ENCODE measurements at regions of chr16 and their contacts with region 1.

Region 1: DNA sequence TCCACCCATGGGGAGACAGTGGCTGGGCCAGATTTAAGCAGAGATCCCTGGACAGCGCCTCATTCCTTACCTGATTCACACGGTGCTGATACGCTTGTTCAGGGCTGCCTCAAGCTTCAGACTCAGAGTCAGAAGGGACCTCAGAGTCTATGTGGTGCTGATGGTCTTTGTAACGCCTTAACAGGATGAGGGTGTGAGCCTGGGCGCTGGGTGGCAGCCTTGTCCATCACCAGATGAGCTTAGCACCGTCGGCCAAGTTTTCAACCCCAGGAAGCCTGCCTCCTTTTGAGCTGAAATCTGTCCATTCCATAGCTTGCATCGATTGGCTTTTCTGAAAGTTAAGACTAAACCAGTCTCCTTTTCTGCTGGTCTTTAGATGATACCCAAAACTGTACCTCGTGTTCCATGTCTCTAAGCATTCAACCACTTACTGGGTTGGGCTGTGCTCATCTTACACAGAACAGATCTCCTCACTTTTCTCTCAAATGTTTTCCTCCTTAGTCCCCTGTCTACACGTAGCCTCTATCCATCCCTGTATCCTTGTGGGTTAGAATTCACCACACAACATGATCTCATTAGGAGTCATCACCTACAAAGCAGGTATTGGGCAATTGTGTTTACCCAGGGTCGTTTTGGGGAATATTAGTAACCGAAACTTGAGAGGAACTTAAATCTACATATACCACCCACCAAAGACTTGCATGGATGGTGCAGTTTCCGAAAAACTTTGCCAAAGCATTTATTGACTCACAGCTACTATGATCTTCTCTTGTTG is 573.4 kb downstream of the CDH13 start:
- DNase-seq: no peak
- H3K4me3 ChIP-seq: no peak overlapping the region
- H3K27ac ChIP-seq: no peak overlapping the region
- H3K4me1 ChIP-seq: no peaks in the 10 kb centered on the region
- H3K27me3 ChIP-seq: no peaks in the 10 kb centered on the region
- CTCF ChIP-seq: no peak

Region 2: GRCh38 chr16:82626791-82627261 is 573.4 kb before region 1 on chr16 and contains the start of gene CDH13:
- intact Hi-C with region 1: loop called (anchors 10 kb)
- DNase-seq: no peak
- H3K4me3 ChIP-seq: peak within 1 kb of the TSS; percentile 29
- H3K27ac ChIP-seq: no peak within 1 kb of the TSS
- H3K4me1 ChIP-seq: peaks cover 5% of the 10 kb centered on the region
- H3K27me3 ChIP-seq: peaks cover 26% of the 10 kb centered on the region
- CTCF ChIP-seq: no peak
- total RNA-seq, gene CDH13: 2.4 to 6.3 TPM

Measured in colonic mucosa (tissue), 4 donors.